CD8-positive, alpha-beta memory T cell (primary cell): ENCODE measurements at regions of chr1 and their contacts with region 1.

Region 1: DNA sequence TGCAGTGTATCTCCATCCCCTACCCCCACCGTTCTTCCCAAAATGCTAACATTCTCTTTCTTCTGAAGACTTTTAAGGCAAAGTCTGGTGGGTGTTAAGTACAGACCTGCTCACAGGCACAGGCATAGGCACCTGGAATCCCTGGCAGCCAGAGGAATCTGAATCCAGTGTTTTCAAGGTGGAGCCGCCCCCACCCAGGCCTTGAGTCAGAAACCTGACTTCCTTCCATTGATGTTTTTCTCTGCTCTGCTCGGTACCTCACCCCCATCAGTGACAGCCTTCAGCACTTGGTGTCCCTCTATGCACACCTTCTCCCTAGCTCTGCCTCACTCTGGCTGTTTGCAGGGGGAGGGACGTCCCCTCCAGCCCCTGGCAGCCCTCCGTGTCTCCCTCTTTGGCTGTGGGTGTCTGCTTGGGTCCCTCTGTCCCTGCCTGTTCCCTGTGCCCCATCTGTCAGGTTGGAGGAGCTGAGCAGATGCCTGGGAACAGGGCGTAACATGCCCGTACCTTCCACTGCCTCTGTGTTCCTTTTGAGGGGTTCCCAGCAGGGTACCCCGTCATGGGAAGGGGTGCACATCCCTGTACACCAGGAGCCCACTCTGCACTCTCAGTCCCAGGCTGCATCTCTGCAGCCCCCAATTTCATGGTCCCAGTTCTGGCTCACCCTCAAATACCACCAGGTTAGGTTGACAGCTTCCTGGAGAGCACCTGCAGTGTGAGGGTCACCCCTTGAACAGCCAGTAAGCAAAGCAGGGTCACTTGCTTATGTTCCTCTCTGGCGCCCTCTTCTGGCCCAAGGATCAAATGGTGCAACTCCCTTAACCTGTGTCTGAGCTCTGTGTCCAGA is 6.7 kb downstream of the NCDN start:
- DNase-seq: peak; percentile 58 to 84 (median 70)
- H3K4me3 ChIP-seq: no peak overlapping the region
- H3K4me3 Mint-ChIP-seq: peak overlapping the region in 1 of 7 donors; percentile 29
- H3K27ac ChIP-seq: no peak overlapping the region
- H3K27ac Mint-ChIP-seq: peak overlapping the region in 7 of 8 donors; percentile 16 to 82 (median 58)
- H3K4me1 ChIP-seq: peaks cover 2% of the 10 kb centered on the region
- H3K4me1 Mint-ChIP-seq: peaks cover 17 to 43% (median 34%) of the 10 kb centered on the region in 3 donors
- H3K27me3 ChIP-seq: no peaks in the 10 kb centered on the region
- H3K27me3 Mint-ChIP-seq: no peaks in the 10 kb centered on the region

Region 2: DNA sequence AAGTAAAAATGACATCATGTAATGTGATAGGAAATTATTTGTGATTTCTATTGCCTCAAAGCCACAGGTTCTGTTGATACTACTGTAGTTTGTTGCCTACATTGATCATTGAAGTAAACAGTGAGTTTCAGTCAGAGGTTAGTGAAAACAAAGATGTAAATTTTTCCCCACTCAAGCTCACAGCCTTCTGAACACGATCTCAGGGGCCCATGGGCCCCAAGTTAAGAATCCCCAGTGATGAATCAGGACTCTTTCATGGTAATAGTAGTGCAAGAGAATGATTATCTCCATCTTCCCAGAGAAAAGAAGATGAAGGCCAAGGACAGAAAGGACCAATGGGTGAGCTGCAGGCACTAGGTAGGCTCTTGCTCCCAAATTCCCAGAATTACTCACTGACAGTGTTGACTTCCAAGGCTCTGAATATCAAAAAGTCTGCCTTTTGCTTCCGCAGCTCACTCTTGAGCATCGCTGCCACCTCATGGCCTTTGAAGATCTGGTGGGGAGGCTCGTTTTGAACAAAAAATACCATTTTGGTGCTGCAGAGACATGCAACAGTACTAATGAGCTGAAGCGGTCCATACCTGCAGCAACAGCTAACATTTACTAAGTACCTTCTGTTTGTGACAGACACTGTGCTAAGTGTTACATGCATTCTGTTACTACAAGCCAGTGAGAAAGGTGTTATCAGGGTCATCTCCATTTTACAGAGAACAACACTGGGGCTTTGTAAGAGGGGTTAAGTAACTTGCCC is 120.3 kb before region 1 on chr1:
- CTCF ChIA-PET with region 1: interaction called, 110 read pairs
- POLR2A ChIA-PET with region 1: no interaction called
- DNase-seq: no peak
- H3K4me3 ChIP-seq: no peak overlapping the region
- H3K4me3 Mint-ChIP-seq: no peak overlapping the region
- H3K27ac ChIP-seq: no peak overlapping the region
- H3K27ac Mint-ChIP-seq: peak overlapping the region in 1 of 8 donors; percentile 23
- H3K4me1 ChIP-seq: peaks cover 8% of the 10 kb centered on the region
- H3K4me1 Mint-ChIP-seq: peaks cover 0 to 5% (median 5%) of the 10 kb centered on the region in 3 donors
- H3K27me3 ChIP-seq: no peaks in the 10 kb centered on the region
- H3K27me3 Mint-ChIP-seq: no peaks in the 10 kb centered on the region

Region 3: GRCh38 chr1:35577071-35577998 is 13.1 kb after region 1 on chr1:
- CTCF ChIA-PET with region 1: interaction called, 13 read pairs
- POLR2A ChIA-PET with region 1: interaction called, 4 read pairs
- DNase-seq: peak; percentile 47 to 84 (median 66)
- H3K4me3 ChIP-seq: peak overlapping the region; percentile 81
- H3K4me3 Mint-ChIP-seq: peak overlapping the region; percentile 69 to 96 (median 93)
- H3K27ac ChIP-seq: peak overlapping the region; percentile 1
- H3K27ac Mint-ChIP-seq: peak overlapping the region; percentile 15 to 97 (median 94)
- H3K4me1 ChIP-seq: peaks cover 20% of the 10 kb centered on the region
- H3K4me1 Mint-ChIP-seq: peaks cover 25 to 37% (median 28%) of the 10 kb centered on the region in 3 donors
- H3K27me3 ChIP-seq: no peaks in the 10 kb centered on the region
- H3K27me3 Mint-ChIP-seq: peaks cover 0 to 2% of the 10 kb centered on the region in 2 donors